CD8-positive, alpha-beta memory T cell (primary cell): ENCODE measurements at regions of chr17 and their contacts with region 1.

Region 1: DNA sequence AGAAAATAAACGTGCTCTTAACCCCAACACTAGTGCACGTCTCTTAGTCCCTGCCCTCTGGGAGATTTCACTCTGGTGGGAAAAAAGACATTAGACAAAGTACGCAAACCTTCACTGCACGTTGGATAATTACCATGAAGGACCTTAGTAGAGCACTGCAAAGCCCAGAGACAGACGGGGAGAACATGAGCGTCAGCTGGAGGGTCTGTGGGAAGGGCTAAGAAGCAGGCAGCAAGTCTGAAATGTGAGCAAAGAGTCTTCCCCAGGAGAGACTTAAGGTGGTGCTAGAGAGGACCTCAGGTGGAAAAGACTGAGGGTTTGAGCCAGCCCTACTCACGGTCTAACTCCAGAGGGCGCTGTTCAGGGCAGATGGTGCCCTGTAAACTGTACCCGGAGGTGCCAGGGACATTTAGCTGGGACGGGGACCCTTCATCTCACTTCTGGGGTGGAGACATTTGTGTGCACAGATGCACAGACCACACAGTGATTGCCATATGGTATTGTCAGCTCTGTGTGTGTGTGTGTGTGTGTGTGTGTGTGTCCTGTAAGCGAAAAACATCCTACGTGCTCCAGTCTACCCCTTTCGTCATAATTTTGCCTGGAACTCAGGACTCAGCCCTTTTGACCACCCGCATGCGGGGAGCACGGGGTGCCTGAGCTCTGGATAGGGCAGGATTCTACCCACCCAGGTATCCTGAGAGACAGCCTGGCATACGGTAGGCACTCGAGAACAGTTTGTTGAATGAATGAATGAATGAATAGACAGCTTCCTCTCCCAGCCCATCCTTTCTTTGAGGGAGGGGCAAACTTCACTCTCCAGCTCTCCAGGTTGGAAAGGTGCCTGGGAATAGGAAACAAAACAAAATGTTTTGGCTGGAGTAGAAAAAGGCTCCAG is 10.1 kb upstream of the STAC2 start:
- DNase-seq: peak; percentile 14 to 62 (median 48)
- H3K4me3 ChIP-seq: no peak overlapping the region
- H3K4me3 Mint-ChIP-seq: peak overlapping the region in 2 of 7 donors; percentile 5 to 26
- H3K27ac ChIP-seq: no peak overlapping the region
- H3K27ac Mint-ChIP-seq: peak overlapping the region; percentile 34 to 93 (median 83)
- H3K4me1 ChIP-seq: peaks cover 53% of the 10 kb centered on the region
- H3K4me1 Mint-ChIP-seq: peaks cover 33 to 45% (median 42%) of the 10 kb centered on the region in 3 donors
- H3K27me3 ChIP-seq: no peaks in the 10 kb centered on the region
- H3K27me3 Mint-ChIP-seq: peaks cover 7 to 13% of the 10 kb centered on the region in 2 donors

Region 2: DNA sequence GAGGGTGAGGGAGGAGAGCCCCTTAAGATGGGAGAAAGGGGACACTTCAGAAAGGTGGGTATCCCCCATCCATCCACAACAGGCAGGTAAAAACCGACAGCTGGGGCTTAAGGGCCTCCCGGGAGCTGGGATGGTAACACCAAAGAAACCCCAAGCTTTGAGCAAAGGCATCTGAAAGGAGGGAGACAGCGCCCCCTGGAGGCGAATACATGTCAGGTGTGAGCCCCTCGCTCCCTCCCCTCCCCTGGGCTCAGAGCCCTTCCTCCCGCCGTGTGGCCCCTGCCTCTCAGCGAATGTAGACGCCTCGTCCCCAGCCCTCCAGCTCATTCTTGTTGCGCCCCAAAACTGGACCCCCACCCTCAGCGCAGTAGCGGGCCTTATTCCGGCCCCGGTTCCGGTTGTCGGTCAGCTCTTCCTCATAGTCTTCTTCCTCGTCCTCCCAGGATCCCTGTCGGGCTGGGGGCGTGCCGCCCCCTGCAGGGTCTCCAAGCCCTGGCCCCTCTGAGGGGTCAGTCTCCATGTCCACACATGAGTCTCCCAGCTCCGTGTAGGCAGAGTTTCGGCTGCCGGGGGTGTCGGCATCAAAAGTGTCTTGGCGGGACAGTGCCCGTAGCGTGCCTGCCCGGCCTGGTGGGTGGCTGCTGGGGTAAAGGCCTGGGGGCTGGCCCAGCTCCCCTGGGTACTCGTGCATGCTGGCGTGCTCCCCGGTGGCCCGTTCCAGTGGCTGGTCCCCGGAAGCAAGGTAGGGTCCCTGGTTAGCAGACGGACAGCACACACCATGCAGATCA is 60.7 kb before region 1 on chr17:
- CTCF ChIA-PET with region 1: interaction called, 13 read pairs
- POLR2A ChIA-PET with region 1: no interaction called
- DNase-seq: peak; percentile 67 to 86 (median 72)
- H3K4me3 ChIP-seq: no peak overlapping the region
- H3K4me3 Mint-ChIP-seq: no peak overlapping the region
- H3K27ac ChIP-seq: no peak overlapping the region
- H3K27ac Mint-ChIP-seq: peak overlapping the region in 3 of 8 donors; percentile 23 to 86 (median 46)
- H3K4me1 ChIP-seq: peaks cover 5% of the 10 kb centered on the region
- H3K4me1 Mint-ChIP-seq: peaks cover 7 to 24% (median 16%) of the 10 kb centered on the region in 3 donors
- H3K27me3 ChIP-seq: no peaks in the 10 kb centered on the region
- H3K27me3 Mint-ChIP-seq: peaks cover 0 to 5% of the 10 kb centered on the region in 2 donors

Region 3: DNA sequence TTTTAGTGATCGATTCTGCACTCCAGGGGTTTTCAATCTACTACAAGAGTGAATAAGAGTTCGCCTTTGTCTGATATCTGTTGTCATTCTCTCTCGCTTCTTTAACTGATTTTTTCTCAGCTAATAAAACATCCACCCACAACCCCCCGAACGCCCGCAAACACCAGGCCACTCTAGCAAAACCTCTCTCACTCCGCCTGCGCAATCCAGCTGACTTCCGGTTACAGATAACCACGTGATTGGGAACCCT is 36.1 kb before region 1 on chr17:
- CTCF ChIA-PET with region 1: interaction called, 272 read pairs
- POLR2A ChIA-PET with region 1: interaction called, 10 read pairs
- DNase-seq: peak; percentile 81 to 94 (median 90)
- H3K4me3 ChIP-seq: peak overlapping the region; percentile 94
- H3K4me3 Mint-ChIP-seq: peak overlapping the region; percentile 92 to 99 (median 94)
- H3K27ac ChIP-seq: peak overlapping the region; percentile 99
- H3K27ac Mint-ChIP-seq: peak overlapping the region; percentile 97 to 100 (median 100)
- H3K4me1 ChIP-seq: peaks cover 54% of the 10 kb centered on the region
- H3K4me1 Mint-ChIP-seq: peaks cover 50 to 76% (median 58%) of the 10 kb centered on the region in 3 donors
- H3K27me3 ChIP-seq: no peaks in the 10 kb centered on the region
- H3K27me3 Mint-ChIP-seq: peaks cover 0 to 4% of the 10 kb centered on the region in 2 donors

Region 4: GRCh38 chr17:39209317-39210092 is 26.3 kb before region 1 on chr17:
- CTCF ChIA-PET with region 1: interaction called, 272 read pairs
- POLR2A ChIA-PET with region 1: interaction called, 5 read pairs
- DNase-seq: peak; percentile 64 to 88 (median 70)
- H3K4me3 ChIP-seq: peak overlapping the region; percentile 39
- H3K4me3 Mint-ChIP-seq: peak overlapping the region; percentile 30 to 85 (median 59)
- H3K27ac ChIP-seq: no peak overlapping the region
- H3K27ac Mint-ChIP-seq: peak overlapping the region in 7 of 8 donors; percentile 39 to 92 (median 77)
- H3K4me1 ChIP-seq: peaks cover 25% of the 10 kb centered on the region
- H3K4me1 Mint-ChIP-seq: peaks cover 13 to 35% (median 20%) of the 10 kb centered on the region in 3 donors
- H3K27me3 ChIP-seq: peaks cover 4% of the 10 kb centered on the region
- H3K27me3 Mint-ChIP-seq: peaks cover 0 to 5% of the 10 kb centered on the region in 2 donors

Region 5: GRCh38 chr17:39222866-39223834 is 12.7 kb before region 1 on chr17:
- CTCF ChIA-PET with region 1: interaction called, 12 read pairs
- POLR2A ChIA-PET with region 1: interaction called, 3 read pairs
- DNase-seq: no peak
- H3K4me3 ChIP-seq: no peak overlapping the region
- H3K4me3 Mint-ChIP-seq: peak overlapping the region in 6 of 7 donors; percentile 28 to 55 (median 48)
- H3K27ac ChIP-seq: no peak overlapping the region
- H3K27ac Mint-ChIP-seq: no peak overlapping the region
- H3K4me1 ChIP-seq: peaks cover 4% of the 10 kb centered on the region
- H3K4me1 Mint-ChIP-seq: peaks cover 6 to 18% (median 12%) of the 10 kb centered on the region in 3 donors
- H3K27me3 ChIP-seq: peaks cover 25% of the 10 kb centered on the region
- H3K27me3 Mint-ChIP-seq: peaks cover 33 to 34% of the 10 kb centered on the region in 2 donors

Region 6: DNA sequence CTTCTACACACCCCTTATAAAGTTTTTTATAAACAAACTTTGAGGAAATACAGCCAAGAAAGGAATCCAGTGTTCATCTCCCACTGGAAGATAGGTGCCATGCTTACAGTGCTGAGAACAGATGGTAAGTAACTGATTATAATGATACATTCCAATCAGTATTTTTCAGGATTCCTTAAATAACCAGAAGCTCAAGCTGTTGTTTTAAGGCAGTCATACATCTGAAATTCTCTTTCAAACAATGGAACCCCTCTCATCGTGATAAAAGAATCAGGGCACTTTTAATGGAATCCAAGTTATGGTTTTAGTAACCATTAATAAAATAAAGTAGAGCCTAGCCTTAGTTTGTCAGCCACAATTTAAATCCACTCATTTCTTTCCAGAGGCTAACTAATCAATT is 46.0 kb after region 1 on chr17:
- CTCF ChIA-PET with region 1: no interaction called
- POLR2A ChIA-PET with region 1: no interaction called
- DNase-seq: no peak
- H3K4me3 ChIP-seq: no peak overlapping the region
- H3K4me3 Mint-ChIP-seq: no peak overlapping the region
- H3K27ac ChIP-seq: no peak overlapping the region
- H3K27ac Mint-ChIP-seq: peak overlapping the region in 2 of 8 donors; percentile 24 to 41
- H3K4me1 ChIP-seq: no peaks in the 10 kb centered on the region
- H3K4me1 Mint-ChIP-seq: no peaks in the 10 kb centered on the region
- H3K27me3 ChIP-seq: no peaks in the 10 kb centered on the region
- H3K27me3 Mint-ChIP-seq: no peaks in the 10 kb centered on the region